Heart left ventricle (tissue), 16 donors: ENCODE measurements at regions of chr6 and their contacts with region 1.

Region 1: DNA sequence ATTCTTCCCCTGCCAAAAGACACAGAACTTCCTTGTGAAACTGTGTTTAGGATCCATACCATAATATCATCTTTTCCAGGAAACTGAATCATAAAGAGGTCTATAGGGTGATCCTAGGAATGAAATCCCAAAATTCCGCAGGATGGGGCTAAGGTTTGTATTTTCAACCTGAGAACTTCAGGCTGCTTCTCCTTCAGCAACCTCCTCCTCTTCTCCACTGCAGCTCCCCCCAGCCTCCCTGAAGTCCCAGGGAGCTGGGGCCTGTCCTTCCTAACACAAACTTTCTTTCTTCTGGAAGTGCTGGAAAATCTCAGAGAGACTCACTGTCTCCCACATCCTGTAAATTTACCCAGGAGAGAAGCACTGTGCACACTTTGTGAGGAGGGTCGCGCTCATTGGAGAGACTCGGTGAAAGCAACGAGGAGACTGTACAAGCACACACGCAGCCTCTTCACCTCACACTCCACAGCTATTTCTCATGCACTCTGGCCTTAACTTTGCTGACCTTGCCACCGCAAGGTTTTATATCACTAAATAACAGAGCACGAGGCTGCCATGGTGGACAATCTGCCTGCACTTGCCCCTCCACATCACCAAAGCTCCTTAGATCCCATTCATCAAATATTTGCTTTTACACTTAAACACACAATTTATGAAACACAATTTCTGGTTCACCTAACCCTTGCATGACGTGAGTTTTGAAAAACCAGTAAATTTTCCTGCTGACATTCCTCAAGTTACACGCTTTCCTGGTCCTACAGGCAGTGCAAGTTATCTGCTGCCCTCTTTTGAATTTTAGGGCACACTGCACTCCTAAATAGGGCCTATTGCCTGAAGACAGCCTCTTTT is 14.3 kb downstream of the ID4 start:
- DNase-seq: peak in 1 of 5 donors; percentile 23
- ATAC-seq: peak; percentile 61 to 94 (median 88)
- H3K4me3 ChIP-seq: peak overlapping the region in 2 of 12 donors; percentile 8 to 11
- H3K27ac ChIP-seq: peak overlapping the region in 2 of 12 donors; percentile 11 to 30
- H3K4me1 ChIP-seq: peaks cover 0 to 9% (median 2%) of the 10 kb centered on the region in 12 donors
- H3K27me3 ChIP-seq: no peaks in the 10 kb centered on the region
- CTCF ChIP-seq: peak; percentile 61 to 93 (median 82)
- POLR2A ChIP-seq: no peak

Region 2: GRCh38 chr6:18595774-18596530 is 1255.5 kb before region 1 on chr6:
- intact Hi-C with region 1: loop called in 4 of 10 experiments (anchors 2 to 10 kb)
- DNase-seq: peak in 3 of 5 donors; percentile 27 to 51 (median 50)
- ATAC-seq: peak; percentile 47 to 83 (median 76)
- H3K4me3 ChIP-seq: peak overlapping the region in 2 of 12 donors; percentile 12 to 22
- H3K27ac ChIP-seq: peak overlapping the region in 1 of 12 donors; percentile 24
- H3K4me1 ChIP-seq: peaks cover 0 to 7% (median 0%) of the 10 kb centered on the region in 12 donors
- H3K27me3 ChIP-seq: no peaks in the 10 kb centered on the region
- CTCF ChIP-seq: peak; percentile 85 to 95 (median 90)
- POLR2A ChIP-seq: no peak

Region 3: DNA sequence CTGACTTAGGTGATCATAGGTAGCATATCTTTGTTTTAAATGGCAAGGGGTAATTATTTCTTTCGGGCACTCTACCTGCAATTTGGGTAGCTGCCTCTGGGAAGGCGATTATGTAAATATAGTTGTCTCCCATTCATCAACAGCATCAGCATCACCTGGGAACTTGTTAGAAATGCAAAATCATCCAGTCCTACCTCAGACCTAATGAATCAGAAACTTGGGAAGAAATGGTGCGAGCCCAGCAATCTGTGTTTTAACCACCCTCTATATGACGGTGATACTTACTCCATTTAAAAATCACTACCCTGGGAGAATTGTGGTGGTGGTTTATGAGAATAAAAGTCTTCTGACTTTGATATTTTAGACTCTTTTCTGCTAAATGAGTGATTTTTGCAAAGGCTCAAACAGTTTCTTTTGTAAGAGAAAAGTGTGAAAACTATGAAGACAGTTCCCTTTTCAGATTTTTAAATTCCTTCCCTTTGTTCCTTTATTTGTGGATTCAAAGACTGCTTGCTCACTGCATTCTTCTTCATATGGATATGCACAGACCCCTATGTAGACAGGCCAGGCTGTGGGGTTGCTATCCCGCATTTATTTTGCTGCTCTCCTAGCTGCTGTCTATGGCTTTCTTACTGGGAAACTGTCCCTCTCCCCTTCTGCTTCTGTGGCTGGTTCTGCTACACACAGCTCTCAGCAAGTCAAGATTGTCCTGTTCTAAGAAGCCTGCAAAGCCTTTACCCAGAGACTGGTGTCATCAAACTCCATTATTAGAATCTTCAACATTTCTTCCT is 1099.0 kb before region 1 on chr6:
- intact Hi-C with region 1: loop called in 4 of 10 experiments (anchors 5 to 10 kb)
- DNase-seq: no peak
- ATAC-seq: no peak
- H3K4me3 ChIP-seq: no peak overlapping the region
- H3K27ac ChIP-seq: no peak overlapping the region
- H3K4me1 ChIP-seq: no peaks in the 10 kb centered on the region
- H3K27me3 ChIP-seq: no peaks in the 10 kb centered on the region
- CTCF ChIP-seq: no peak
- POLR2A ChIP-seq: no peak

Region 4: DNA sequence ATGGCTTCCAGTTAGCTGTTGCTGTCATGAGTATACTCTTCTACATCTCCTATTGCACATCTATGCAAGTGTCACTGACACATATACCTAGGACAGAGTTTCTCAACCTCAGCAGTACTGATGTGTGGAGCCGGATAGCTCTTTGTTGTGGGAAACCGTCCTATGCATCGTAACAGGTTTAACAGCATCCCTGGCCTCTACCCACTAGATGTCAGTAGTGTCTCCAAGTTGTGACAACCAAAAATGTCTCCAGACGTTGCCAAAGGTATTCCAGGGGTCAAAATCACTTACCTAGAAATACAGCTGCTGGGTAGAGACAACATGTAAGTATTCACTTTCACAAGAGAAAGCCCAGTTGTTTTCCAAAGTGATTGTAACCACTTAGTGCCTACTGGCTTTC is 826.7 kb before region 1 on chr6:
- intact Hi-C with region 1: loop called in 8 of 10 experiments (anchors 5 to 10 kb)
- DNase-seq: no peak
- ATAC-seq: peak; percentile 61 to 88 (median 71)
- H3K4me3 ChIP-seq: no peak overlapping the region
- H3K27ac ChIP-seq: no peak overlapping the region
- H3K4me1 ChIP-seq: peaks cover 0 to 3% (median 0%) of the 10 kb centered on the region in 12 donors
- H3K27me3 ChIP-seq: no peaks in the 10 kb centered on the region
- CTCF ChIP-seq: peak; percentile 13 to 68 (median 52)
- POLR2A ChIP-seq: no peak

Region 5: DNA sequence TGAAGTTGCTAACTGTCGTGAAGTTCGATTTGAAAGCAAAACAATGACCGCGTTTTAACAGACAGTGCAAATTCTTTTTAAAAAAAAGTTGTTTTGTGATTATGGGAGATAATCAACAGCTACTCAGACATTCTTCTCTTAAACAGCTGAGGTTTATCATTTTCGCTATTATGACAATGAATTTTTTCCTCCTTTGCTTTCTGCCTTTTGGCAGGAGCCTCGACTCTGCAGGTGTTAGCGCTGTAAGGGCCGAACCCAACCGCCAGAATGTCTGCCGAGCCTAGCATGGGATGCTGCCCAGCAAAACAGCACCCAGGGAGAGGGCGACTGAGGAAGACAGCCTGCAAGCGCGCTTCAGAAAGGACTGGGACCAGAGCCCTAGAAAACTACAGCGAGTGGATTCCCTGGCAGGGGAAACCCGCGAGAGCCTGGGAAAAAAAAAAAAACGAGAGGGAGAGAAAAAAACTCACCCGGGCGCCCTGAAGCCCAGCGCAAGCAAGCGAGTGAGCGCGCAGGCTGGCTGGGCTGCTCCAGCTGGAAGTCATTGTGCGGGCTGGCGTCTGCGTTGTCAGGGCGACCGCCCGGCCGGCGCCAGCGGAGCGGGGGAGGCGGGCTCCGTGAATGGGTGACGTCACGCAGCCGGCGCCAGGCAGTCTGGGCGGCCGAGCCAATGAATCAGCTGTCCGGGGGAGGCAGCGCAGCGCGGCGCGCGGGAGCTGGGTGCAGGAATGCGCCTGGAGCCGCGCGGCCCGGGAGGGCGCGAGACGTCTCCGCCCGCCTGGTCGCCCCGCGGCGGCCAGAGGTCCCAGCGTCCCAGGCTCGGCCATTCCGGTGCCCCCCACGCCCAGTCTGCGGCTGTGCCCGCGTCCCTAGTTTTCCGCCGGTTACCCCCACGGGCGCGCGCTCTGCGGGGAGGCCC is 47.0 kb before region 1 on chr6:
- intact Hi-C with region 1: loop called in 1 of 10 experiments (anchors 5 kb)
- DNase-seq: peak; percentile 96 to 97 (median 97)
- ATAC-seq: peak; percentile 98 to 100 (median 99)
- H3K4me3 ChIP-seq: peak overlapping the region; percentile 12 to 67 (median 58)
- H3K27ac ChIP-seq: peak overlapping the region; percentile 82 to 99 (median 92)
- H3K4me1 ChIP-seq: peaks cover 0 to 28% (median 7%) of the 10 kb centered on the region in 12 donors
- H3K27me3 ChIP-seq: peaks cover 0 to 12% (median 0%) of the 10 kb centered on the region in 9 donors
- CTCF ChIP-seq: peak in 1 of 12 donors; percentile 9
- POLR2A ChIP-seq: peak; percentile 36 to 88

Region 6: DNA sequence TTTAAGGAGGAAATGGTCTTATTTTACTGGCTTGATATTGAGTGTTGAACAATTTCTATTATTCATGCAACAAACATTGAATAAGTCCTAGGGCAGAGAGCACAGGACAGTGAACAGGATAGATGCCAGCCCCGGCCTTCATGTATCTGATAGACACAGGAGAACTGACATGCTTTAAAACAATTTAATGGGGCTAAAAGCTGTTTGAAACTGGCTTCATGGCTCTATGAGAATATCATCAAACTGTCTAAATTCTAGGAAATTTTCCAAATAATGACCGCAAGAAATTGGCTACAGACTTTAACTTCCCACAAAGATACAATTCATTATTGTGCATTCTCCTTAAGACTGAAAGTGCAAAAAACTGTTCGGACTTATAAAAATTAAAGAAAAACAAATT is 54.7 kb after region 1 on chr6:
- intact Hi-C with region 1: no loop called
- DNase-seq: no peak
- ATAC-seq: peak in 1 of 4 donors; percentile 61
- H3K4me3 ChIP-seq: peak overlapping the region in 2 of 12 donors; percentile 28 to 33
- H3K27ac ChIP-seq: peak overlapping the region in 6 of 12 donors; percentile 11 to 70 (median 60)
- H3K4me1 ChIP-seq: no peaks in the 10 kb centered on the region
- H3K27me3 ChIP-seq: no peaks in the 10 kb centered on the region
- CTCF ChIP-seq: no peak
- POLR2A ChIP-seq: no peak